K562 (cell line): ENCODE measurements at regions of chr14 and their contacts with region 1.

Region 1: DNA sequence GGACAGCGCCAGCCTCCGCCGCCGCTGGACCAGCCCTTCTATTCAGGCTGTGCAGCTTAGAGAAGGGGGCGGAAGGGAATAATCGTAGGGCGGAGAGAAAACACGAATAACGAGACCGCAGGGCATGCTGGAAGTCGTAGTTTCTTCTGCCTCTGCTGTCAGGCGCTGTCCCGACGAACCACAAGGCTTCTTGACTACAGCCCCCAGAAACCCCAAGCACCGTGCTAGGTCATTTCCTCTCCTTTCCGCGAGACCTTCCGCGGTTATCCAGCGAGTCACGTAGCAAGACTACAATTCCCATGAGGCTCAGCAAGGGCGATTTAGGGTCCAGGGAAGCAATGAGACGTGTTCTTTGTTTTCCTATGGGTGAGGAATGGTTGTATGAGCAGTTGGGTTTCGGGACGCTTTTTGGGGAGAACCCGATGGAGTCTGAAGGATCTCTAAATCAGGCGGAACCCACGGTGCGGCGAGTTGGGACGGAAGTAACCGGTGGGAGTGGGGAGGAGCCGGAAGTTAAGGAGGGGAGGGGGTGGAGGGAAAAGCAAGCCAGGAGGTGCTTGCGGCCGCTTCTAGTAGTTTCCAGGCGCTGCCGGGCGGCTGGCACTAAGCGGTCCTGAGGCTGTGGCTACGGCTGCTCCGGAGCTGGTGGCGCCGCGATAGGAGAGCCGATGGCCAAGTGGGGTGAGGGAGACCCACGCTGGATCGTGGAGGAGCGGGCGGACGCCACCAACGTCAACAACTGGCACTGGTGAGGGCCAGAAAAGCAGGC is at the starts of genes AHSA1 and VIPAS39:
- DNase-seq: peak; percentile 77 to 96 (median 82)
- ATAC-seq: peak; percentile 95
- H3K4me3 ChIP-seq: peak within 1 kb of the TSS; percentile 96
- H3K27ac ChIP-seq: peak within 1 kb of the TSS; percentile 99
- H3K4me1 ChIP-seq: peaks cover 7 to 11% of the 10 kb centered on the region in 2 experiments; a peak in 3 of 5 replicates
- H3K27me3 ChIP-seq: no peaks in the 10 kb centered on the region
- CTCF ChIP-seq: peak in 1 of 3 experiments; percentile 7; a peak in 1 of 6 replicates
- EP300 ChIP-seq: no peak
- POLR2A ChIP-seq: peak; percentile 78
- RAD21 ChIP-seq: no peak
- polyA plus RNA-seq, gene AHSA1: 41.4 to 75.1 TPM
- polyA plus RNA-seq, gene VIPAS39: 5.7 to 10.5 TPM

Region 2: GRCh38 chr14:77301103-77301502 is 156.6 kb before region 1 on chr14:
- CTCF ChIA-PET with region 1: interaction called, 3 read pairs
- POLR2A ChIA-PET with region 1: interaction called, 6 read pairs
- in situ Hi-C with region 1: no loop called
- intact Hi-C with region 1: loop called (anchors 5 kb)
- DNase-seq: peak; percentile 43 to 78 (median 54)
- ATAC-seq: peak; percentile 92
- H3K4me3 ChIP-seq: no peak overlapping the region
- H3K27ac ChIP-seq: no peak overlapping the region
- H3K4me1 ChIP-seq: peaks cover 0 to 5% of the 10 kb centered on the region in 2 experiments; a peak in 2 of 5 replicates
- H3K27me3 ChIP-seq: no peaks in the 10 kb centered on the region
- CTCF ChIP-seq: peak; percentile 75 to 85 (median 78)
- EP300 ChIP-seq: no peak
- POLR2A ChIP-seq: no peak
- RAD21 ChIP-seq: peak; percentile 57 to 71

Region 3: DNA sequence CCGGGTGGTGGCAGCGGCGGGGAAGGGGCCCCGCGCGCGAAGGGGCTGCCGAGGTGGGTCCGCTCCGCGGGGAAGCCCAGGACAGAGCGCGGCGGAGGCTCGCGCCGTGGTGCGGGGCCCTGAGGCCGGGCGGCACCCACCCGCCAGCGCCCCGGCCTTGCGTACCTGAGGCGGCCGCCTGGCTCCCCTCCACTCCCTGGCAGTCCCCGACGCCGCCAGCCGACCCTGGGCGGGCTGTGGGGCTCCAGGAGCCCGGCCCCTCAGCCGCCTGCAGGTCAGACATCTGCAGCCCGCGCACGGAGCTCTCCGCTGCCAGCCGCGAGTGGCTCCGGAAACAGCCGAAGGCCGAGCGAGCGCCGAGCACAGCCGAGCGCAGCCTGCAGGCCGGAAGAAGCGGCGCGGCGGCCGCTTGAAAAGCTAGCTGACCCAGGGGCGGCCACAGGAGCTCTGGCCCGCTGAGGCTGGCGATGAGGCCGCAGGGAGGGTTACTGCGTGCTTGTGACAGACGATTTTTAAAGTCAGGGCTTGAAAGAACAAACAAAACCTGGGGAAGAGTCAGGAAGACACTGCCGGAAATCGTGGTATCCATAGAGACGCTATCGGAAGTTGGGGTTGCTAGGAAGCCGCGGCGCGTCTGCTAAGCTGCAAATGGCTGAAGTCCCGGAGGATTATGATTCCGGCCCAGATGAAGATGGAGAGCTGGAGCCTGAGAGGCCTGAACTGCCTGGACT is 80.8 kb before region 1 on chr14 and contains the starts of genes SAMD15 and TMED8:
- CTCF ChIA-PET with region 1: no interaction called
- POLR2A ChIA-PET with region 1: no interaction called
- in situ Hi-C with region 1: no loop called
- intact Hi-C with region 1: loop called (anchors 2 kb)
- DNase-seq: peak; percentile 73 to 80 (median 78)
- ATAC-seq: peak; percentile 99
- H3K4me3 ChIP-seq: peak within 1 kb of the TSS; percentile 90
- H3K27ac ChIP-seq: peak within 1 kb of the TSS; percentile 83
- H3K4me1 ChIP-seq: peaks cover 6 to 12% of the 10 kb centered on the region in 2 experiments; a peak in 3 of 5 replicates
- H3K27me3 ChIP-seq: no peaks in the 10 kb centered on the region
- CTCF ChIP-seq: 0 out of 6 replicates have a peak, but pooled peaks have one; percentile 16
- EP300 ChIP-seq: no peak
- POLR2A ChIP-seq: peak; percentile 62
- RAD21 ChIP-seq: no peak
- polyA plus RNA-seq, gene SAMD15: 0.20 to 0.22 TPM
- polyA plus RNA-seq, gene TMED8: 3.3 to 4.7 TPM

Region 4: DNA sequence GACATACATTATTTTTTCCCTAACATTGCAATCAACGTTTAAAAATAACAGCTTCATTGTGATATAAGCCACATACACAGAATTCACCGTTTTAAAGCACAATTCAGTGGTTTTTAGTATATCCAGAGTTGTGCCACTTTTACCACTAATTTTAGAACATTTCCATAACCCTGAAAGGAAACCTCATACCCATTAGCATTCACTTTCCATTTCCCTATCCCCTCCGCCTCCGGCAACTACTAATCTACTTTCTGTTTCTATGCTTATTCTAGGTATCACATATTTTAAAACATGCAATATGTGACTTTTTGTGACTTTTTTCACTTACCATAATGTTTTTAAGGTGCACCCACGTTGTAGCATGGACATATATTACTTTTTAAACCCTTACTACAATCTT is 96.5 kb after region 1 on chr14:
- CTCF ChIA-PET with region 1: no interaction called
- POLR2A ChIA-PET with region 1: no interaction called
- in situ Hi-C with region 1: no loop called
- intact Hi-C with region 1: loop called (anchors 1 kb)
- DNase-seq: no peak
- ATAC-seq: no peak
- H3K4me3 ChIP-seq: no peak overlapping the region
- H3K27ac ChIP-seq: no peak overlapping the region
- H3K4me1 ChIP-seq: no peaks in the 10 kb centered on the region
- H3K27me3 ChIP-seq: no peaks in the 10 kb centered on the region
- CTCF ChIP-seq: no peak
- EP300 ChIP-seq: no peak
- POLR2A ChIP-seq: no peak
- RAD21 ChIP-seq: no peak

Region 5: DNA sequence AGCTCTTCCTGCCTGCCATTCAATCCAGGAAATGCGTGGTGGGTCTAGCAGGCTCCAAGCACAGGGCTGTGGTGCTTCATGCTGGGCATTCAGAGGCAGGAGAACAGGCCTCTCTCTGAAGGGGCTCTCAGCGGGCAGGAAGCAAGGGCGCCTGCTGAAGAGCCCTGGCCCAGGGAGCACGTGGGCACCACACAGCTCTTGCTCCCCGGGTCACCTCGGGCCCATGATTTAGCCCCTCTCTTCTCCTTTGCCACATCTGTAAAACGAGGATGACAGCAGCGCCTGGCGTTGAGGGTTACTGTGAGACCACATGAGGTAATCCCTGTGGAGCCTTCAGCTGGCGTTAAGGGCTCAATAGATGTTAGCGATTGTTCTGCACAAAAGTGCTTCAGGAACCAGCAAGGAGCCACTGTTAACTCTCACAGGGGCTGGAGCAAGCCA is 196.3 kb after region 1 on chr14:
- CTCF ChIA-PET with region 1: no interaction called
- POLR2A ChIA-PET with region 1: no interaction called
- in situ Hi-C with region 1: no loop called
- intact Hi-C with region 1: loop called (anchors 5 kb)
- DNase-seq: no peak
- ATAC-seq: no peak; the same call in 2 of the 3 replicates
- H3K4me3 ChIP-seq: no peak overlapping the region
- H3K27ac ChIP-seq: no peak overlapping the region
- H3K4me1 ChIP-seq: peaks cover 0 to 4% of the 10 kb centered on the region in 2 experiments; a peak in 4 of 5 replicates
- H3K27me3 ChIP-seq: no peaks in the 10 kb centered on the region
- CTCF ChIP-seq: no peak
- EP300 ChIP-seq: no peak
- POLR2A ChIP-seq: no peak
- RAD21 ChIP-seq: no peak